GM10248 (cell line): ENCODE measurements at regions of chr1 and their contacts with region 1.

Region 1: GRCh38 chr1:24946861-24947658 is 17.0 kb upstream of the RUNX3 start:
- DNase-seq: peak; percentile 86
- CTCF ChIP-seq: no peak

Region 2: DNA sequence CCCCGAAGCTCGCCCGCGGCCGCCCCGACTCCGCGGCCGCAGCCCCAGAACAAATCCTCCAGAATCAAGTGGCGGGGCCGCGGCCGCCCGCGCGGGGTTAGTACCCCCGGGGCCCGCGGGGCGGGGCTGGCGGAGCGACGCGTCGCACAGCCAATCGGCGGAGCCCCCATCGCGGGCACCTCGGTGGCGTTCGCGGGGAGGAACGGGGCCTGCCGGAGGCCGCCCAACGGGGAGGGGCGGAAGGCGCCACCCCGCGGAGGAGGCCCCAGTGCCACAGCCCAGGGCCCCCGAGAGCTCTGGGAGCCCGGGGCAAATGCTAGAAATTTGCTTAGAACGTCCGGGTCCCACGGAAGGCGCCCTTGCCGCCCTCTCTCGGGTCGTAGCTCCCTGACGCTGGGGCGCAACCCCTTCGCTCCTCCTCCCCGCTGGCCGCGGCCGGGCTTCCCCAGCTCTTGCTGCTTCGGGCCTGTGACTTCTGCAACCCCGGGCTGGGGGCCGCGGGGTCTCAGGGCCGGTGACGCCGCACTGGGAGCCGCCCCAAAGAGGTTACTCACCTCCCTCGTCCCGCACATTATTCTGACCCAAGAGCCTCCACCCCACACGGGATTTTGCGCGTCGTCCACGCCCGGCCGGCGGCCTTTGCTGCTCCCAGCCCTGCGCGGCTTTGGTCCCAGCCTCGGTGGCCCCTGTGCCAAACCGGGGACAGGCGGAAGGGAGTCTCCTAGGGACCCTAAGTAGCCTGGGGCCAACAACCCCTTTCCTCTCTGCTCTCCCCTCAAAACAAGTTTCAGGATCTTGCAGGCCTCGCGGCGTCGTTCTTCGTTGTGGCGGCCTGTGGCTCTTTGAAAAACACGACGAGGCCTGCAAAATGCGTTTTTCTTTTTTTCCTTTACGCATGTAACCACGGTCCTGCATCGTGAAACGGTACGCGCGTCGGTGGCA is 16.6 kb before region 1 on chr1 and contains the start of gene RUNX3:
- CTCF ChIA-PET with region 1: interaction called, 21 read pairs
- POLR2A ChIA-PET with region 1: interaction called, 6 read pairs
- DNase-seq: peak; percentile 96
- CTCF ChIP-seq: peak; percentile 36